ENCODE measurements at regions of chr13 and their contacts with region 1.

Region 1: DNA sequence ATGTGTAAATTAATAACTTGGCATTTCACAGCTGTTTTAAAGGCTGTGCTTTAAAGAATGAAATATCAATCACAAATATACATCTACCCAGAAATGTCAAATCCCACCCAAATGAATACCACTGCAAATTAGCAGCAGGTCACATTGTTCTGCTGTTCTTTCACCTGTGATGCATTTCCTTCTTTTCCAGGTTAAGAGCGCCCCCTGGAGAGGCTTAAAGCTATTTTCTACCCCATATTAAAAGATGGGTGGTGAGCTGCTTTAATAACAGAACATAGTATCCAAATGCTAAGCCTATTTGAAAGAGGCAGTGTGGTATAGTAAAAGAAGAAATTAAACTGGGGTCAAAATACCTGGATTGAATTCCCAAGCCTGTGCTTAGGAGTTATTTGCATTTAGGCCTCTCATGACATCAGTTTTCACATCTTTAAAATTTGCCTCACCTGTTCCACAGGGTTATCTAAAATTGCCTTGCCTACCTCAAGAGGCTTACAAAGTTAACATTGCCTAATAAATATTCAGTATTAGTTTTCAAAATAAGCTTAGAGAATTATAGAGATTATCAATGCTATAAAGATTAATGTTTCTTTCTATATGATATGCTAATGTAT is 396.9 kb upstream of the SLITRK5 start:
- DNase-seq: peak; percentile 45
- H3K4me3 Mint-ChIP-seq: no peak overlapping the region
- H3K27ac Mint-ChIP-seq: no peak overlapping the region
- H3K4me1 Mint-ChIP-seq: no peaks in the 10 kb centered on the region
- H3K27me3 Mint-ChIP-seq: no peaks in the 10 kb centered on the region

Region 2: GRCh38 chr13:86085890-86086289 is 1188.4 kb before region 1 on chr13:
- CTCF ChIA-PET with region 1: no interaction called
- intact Hi-C with region 1: loop called (anchors 5 kb)
- DNase-seq: no peak
- H3K4me3 Mint-ChIP-seq: no peak overlapping the region
- H3K27ac Mint-ChIP-seq: no peak overlapping the region
- H3K4me1 Mint-ChIP-seq: no peaks in the 10 kb centered on the region
- H3K27me3 Mint-ChIP-seq: no peaks in the 10 kb centered on the region

Region 3: DNA sequence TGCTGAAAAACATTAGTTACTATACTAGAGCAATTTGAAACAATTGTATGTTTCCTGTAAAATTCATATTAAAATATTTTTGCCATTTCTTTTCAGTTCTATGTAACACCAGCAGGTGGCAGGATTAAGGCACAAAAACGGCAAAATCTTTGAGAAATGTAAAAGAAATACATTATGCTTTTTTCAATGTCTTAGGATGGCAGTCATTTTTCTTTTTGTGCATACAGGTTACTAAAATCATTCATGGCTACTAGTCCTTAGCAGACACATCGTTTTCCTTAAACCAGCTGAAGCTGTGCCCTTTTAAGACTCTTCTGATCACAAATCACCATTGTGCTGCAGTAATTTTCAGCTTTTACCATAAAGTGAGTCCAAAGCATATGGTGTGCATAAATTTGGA is 403.9 kb before region 1 on chr13:
- CTCF ChIA-PET with region 1: interaction called, 4 read pairs
- intact Hi-C with region 1: loop called (anchors 1 kb)
- DNase-seq: no peak
- H3K4me3 Mint-ChIP-seq: no peak overlapping the region
- H3K27ac Mint-ChIP-seq: no peak overlapping the region
- H3K4me1 Mint-ChIP-seq: no peaks in the 10 kb centered on the region
- H3K27me3 Mint-ChIP-seq: no peaks in the 10 kb centered on the region

Region 4: DNA sequence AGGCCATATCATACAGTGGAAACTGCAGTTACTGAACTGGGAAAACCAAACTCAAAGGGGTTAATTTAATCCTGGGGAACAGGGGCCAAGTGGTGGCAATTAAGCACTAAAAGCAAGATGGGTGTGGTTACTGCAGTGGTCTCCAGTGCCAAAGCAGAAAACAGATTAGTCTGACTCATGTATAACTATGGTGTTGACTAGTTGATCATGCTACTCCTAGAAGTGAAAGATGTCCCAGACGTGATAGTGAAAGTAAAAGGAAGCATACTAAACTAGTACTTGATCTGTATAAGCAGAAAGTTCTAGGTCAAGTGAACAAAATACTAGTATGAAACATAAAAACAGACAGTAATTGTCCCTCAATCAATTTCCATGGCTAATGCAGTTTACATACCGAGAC is 36.9 kb after region 1 on chr13:
- CTCF ChIA-PET with region 1: no interaction called
- intact Hi-C with region 1: no loop called
- DNase-seq: no peak
- H3K4me3 Mint-ChIP-seq: no peak overlapping the region
- H3K27ac Mint-ChIP-seq: no peak overlapping the region
- H3K4me1 Mint-ChIP-seq: no peaks in the 10 kb centered on the region
- H3K27me3 Mint-ChIP-seq: no peaks in the 10 kb centered on the region